ENCODE measurements at regions of chr1 and their contacts with region 1.

Region 1: GRCh38 chr1:98749152-98749756 is 87.7 kb downstream of the SNX7 start:
- DNase-seq: no peak
- H3K4me3 Mint-ChIP-seq: no peak overlapping the region
- H3K27ac Mint-ChIP-seq: no peak overlapping the region
- H3K4me1 Mint-ChIP-seq: no peaks in the 10 kb centered on the region
- H3K27me3 Mint-ChIP-seq: peaks cover 5% of the 10 kb centered on the region

Region 2: DNA sequence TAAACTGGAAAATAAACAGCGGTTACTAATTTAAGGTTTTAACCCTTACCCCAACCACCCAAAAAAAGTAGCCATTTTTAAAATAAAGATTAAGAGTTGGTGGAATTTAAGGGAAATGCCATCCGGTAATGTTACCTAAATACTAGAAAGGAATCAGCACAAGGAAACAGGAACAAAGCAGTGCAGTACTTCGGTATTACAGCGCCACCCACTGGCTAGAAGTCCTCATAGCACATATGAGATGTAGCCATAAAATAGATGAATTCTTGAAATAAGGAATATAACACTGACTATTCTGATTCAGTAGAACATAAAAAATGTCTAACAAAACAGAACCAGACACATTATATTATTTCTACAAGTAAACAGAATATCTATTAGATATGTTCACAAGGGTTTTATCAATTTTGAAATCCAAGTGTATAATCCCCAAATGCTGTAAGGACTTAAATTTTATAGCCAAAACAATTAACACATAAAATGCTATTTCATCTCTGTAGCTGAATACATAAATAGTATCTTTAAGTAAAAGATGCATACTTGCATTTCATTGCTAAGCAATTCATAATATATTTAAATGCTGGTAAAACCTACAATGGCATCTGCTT is 958.4 kb after region 1 on chr1:
- intact Hi-C with region 1: loop called (anchors 2 kb)
- DNase-seq: peak; percentile 87
- H3K4me3 Mint-ChIP-seq: no peak overlapping the region
- H3K27ac Mint-ChIP-seq: no peak overlapping the region
- H3K4me1 Mint-ChIP-seq: peaks cover 7% of the 10 kb centered on the region
- H3K27me3 Mint-ChIP-seq: peaks cover 4% of the 10 kb centered on the region

Measured in activated CD4-positive, alpha-beta T cell treated with anti-CD3 and anti-CD28 coated beads, Interleukin-2, amount 10 ng/mL, durations not matched to agents 24 days and 14 days (primary cell).